ENCODE measurements at regions of chr15 and their contacts with region 1.

Region 1: GRCh38 chr15:40217159-40217824 is 21.6 kb upstream of the PAK6 start:
- DNase-seq: no peak
- H3K4me3 ChIP-seq: no peak overlapping the region
- H3K27ac ChIP-seq: no peak overlapping the region
- H3K4me1 ChIP-seq: no peaks in the 10 kb centered on the region
- H3K27me3 ChIP-seq: no peaks in the 10 kb centered on the region
- CTCF ChIP-seq: peak; percentile 82 to 85

Region 2: GRCh38 chr15:40252438-40253166 is 35.3 kb after region 1 on chr15:
- intact Hi-C with region 1: no loop called
- DNase-seq: no peak
- H3K4me3 ChIP-seq: peak overlapping the region; percentile 48 to 63
- H3K27ac ChIP-seq: peak overlapping the region; percentile 10 to 20
- H3K4me1 ChIP-seq: peaks cover 0 to 38% (median 15%) of the 10 kb centered on the region in 4 donors
- H3K27me3 ChIP-seq: no peaks in the 10 kb centered on the region
- CTCF ChIP-seq: no peak

Region 3: DNA sequence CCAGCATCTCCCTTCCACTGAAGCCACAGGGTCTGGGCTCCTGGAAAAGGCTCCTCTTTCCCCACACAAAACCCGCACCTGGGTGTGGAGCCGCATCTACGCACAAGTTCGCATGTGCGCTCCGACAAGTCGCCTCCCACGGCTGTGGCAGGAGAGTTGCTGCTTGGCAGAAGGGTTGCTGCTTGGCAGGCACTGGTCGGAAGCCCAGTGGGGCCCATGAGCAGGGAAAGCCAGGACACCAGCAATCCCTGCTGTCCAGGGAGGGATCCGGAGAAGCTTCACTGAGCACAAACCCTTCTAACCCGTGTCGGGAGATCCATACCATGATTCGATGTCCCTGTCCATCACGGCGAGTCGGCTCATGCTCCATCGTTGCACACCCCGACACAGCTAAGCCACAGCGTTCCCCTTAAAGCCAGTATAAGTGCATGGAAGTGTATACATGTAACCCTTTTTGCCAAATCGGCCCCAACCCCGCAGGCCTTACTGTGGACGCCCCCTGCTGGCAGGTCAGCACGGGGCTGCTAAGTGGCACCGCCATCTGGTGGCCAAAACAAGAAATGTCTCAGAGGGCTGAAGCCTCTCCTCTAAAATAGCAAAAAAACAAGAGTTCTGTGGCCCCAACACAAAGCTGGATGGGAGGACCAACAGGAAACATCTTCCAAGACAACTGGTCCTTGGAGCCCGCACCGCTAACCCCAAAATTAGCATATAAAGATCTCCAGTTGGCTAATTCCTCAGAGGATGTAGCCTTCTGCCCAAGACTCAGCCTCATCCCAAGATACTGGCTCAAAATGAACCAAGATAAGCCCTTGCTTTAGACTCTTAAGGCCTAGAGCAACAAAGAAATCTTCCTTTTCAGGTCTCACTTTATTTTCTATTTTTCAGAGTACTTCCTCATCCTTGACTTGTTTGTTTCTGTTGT is 57.3 kb after region 1 on chr15:
- intact Hi-C with region 1: loop called (anchors 2 kb)
- DNase-seq: peak; percentile 69 to 83
- H3K4me3 ChIP-seq: no peak overlapping the region
- H3K27ac ChIP-seq: no peak overlapping the region
- H3K4me1 ChIP-seq: peaks cover 0 to 9% (median 2%) of the 10 kb centered on the region in 4 donors
- H3K27me3 ChIP-seq: peaks cover 0 to 35% of the 10 kb centered on the region in 2 donors
- CTCF ChIP-seq: peak; percentile 100

Region 4: DNA sequence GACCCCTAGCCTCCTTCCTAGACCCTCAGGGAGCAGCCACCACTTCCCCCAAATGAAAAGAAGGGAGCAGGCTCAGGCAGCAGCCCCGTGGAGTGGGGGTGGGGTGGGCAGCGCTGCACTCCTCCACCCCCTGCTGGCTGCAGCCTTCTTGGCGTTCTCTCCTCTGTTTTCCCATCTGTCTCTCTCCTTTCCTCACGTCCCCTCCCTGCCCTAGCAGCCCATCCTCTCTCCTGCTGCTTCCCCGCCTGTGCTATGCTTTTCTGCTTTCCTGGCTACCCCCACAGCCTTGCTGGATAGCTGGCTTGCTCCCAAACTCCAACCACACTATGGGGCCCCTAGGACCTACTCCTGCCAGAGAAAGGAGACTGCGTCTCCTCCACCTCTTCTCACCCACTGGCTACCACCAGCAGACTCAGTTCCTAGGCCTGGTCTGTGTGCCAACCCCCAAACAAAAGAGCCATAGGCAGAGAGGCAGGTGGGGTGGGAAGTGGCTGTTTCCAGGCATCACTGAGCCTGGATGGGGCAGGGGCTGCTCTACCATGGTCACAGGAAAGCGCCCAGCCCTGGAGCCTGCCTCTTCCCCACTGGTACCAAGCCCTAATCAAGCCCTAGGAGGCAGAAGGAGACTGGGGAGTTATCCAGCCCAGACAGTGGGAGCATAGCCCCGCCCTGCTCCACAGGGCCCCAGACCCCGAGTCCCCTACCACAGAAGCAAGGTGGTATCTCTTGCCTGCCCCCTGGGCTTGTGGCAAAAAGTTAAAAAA is 137.3 kb after region 1 on chr15:
- intact Hi-C with region 1: loop called (anchors 5 kb)
- DNase-seq: no peak
- H3K4me3 ChIP-seq: no peak overlapping the region
- H3K27ac ChIP-seq: no peak overlapping the region
- H3K4me1 ChIP-seq: peaks cover 0 to 27% (median 17%) of the 10 kb centered on the region in 4 donors
- H3K27me3 ChIP-seq: peaks cover 0 to 4% of the 10 kb centered on the region in 2 donors
- CTCF ChIP-seq: peak; percentile 38 to 41